Activated CD4-positive, alpha-beta memory T cell treated with anti-CD3 and anti-CD28 coated beads for 36 hours (primary cell): ENCODE measurements at regions of chr1 and their contacts with region 1.

Region 1: DNA sequence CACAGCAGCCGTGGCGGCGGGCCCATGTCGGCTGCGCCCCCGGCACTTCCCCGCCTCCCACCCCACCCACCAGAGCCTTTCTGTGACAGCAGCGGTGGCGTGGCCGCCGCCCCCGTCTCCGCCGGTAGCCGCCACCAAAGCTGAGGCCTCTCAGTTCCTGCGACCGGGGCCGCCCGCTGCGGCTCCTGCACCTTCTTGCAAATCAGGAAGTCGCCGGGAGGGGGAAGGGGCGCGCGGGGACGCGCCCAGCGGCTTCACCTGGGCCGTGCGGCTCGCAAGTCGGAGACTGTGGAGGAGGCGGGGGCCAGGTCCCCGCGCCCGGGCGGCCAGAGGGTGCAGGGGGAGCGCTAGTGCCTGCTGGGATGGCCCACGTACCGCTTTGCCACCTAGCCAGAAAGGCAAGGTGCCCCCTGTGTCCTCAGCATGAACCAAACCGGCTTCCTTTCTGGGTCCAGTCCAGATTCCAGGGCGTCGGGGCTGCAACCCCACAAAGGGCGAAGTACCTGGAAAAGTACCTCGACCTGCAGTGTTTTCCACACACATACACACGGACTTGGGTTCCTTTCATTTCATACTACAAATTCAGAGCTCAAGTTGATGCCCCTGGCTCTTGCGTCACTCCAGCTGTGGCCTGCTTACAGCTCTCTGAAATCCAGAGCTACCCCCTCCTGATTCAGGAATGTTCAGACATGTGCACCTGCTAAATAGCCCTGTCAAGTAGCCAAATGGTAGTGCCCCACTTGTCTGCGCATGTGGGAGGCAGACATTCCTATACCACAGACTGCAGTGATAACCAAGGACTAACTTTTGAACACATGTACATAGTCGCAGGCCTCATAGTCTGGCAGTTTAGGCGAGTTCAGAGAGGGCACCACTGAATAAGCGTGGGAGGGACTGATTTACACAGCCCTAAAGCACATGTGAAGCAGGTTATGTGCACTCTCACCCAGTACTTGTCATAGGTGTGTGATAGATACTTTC is at the start of gene DENND1B:
- DNase-seq: peak; percentile 87
- H3K4me3 Mint-ChIP-seq: peak within 1 kb of the TSS; percentile 92
- H3K27ac Mint-ChIP-seq: peak within 1 kb of the TSS; percentile 100
- H3K4me1 Mint-ChIP-seq: peaks cover 69% of the 10 kb centered on the region
- H3K27me3 Mint-ChIP-seq: no peaks in the 10 kb centered on the region
- total RNA-seq, gene DENND1B: 12.5 to 15.6 TPM

Region 2: DNA sequence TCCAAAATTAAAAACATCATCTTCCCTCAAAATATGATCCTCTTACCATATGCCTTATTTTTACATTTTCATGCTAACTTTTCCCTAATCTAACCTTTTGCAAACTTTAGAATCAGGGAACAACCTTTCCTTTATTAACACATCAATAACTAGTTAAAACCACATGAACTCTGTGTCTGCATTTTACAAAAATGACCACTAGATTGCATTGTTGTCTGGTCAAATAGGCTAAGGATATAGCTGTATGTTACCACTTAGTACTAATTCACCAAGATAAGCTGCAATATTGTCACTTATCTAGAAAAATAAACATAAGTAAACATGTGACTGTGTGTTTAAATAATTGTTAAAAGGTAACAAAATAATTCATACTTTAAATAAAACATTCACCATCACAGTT is 82.6 kb before region 1 on chr1:
- CTCF ChIA-PET with region 1: no interaction called
- POLR2A ChIA-PET with region 1: no interaction called
- intact Hi-C with region 1: loop called (anchors 5 kb)
- DNase-seq: no peak
- H3K4me3 Mint-ChIP-seq: no peak overlapping the region
- H3K27ac Mint-ChIP-seq: no peak overlapping the region
- H3K4me1 Mint-ChIP-seq: peaks cover 34% of the 10 kb centered on the region
- H3K27me3 Mint-ChIP-seq: no peaks in the 10 kb centered on the region

Region 3: GRCh38 chr1:197868751-197869489 is 93.3 kb after region 1 on chr1:
- CTCF ChIA-PET with region 1: interaction called, 7 read pairs
- POLR2A ChIA-PET with region 1: no interaction called
- intact Hi-C with region 1: loop called (anchors 5 kb)
- DNase-seq: peak; percentile 50
- H3K4me3 Mint-ChIP-seq: no peak overlapping the region
- H3K27ac Mint-ChIP-seq: no peak overlapping the region
- H3K4me1 Mint-ChIP-seq: no peaks in the 10 kb centered on the region
- H3K27me3 Mint-ChIP-seq: no peaks in the 10 kb centered on the region

Region 4: GRCh38 chr1:198465201-198466144 is 689.9 kb after region 1 on chr1:
- CTCF ChIA-PET with region 1: no interaction called
- POLR2A ChIA-PET with region 1: no interaction called
- intact Hi-C with region 1: loop called (anchors 2 kb)
- DNase-seq: no peak
- H3K4me3 Mint-ChIP-seq: no peak overlapping the region
- H3K27ac Mint-ChIP-seq: no peak overlapping the region
- H3K4me1 Mint-ChIP-seq: peaks cover 12% of the 10 kb centered on the region
- H3K27me3 Mint-ChIP-seq: no peaks in the 10 kb centered on the region

Region 5: GRCh38 chr1:198669023-198669698 is 893.6 kb after region 1 on chr1:
- CTCF ChIA-PET with region 1: no interaction called
- POLR2A ChIA-PET with region 1: no interaction called
- intact Hi-C with region 1: loop called (anchors 5 kb)
- DNase-seq: peak; percentile 65
- H3K4me3 Mint-ChIP-seq: peak overlapping the region; percentile 63
- H3K27ac Mint-ChIP-seq: peak overlapping the region; percentile 96
- H3K4me1 Mint-ChIP-seq: peaks cover 92% of the 10 kb centered on the region
- H3K27me3 Mint-ChIP-seq: no peaks in the 10 kb centered on the region